Activated CD4-positive, alpha-beta T cell treated with anti-CD3 and anti-CD28 coated beads for 36 hours (primary cell): ENCODE measurements at regions of chr18 and their contacts with region 1.

Region 1: DNA sequence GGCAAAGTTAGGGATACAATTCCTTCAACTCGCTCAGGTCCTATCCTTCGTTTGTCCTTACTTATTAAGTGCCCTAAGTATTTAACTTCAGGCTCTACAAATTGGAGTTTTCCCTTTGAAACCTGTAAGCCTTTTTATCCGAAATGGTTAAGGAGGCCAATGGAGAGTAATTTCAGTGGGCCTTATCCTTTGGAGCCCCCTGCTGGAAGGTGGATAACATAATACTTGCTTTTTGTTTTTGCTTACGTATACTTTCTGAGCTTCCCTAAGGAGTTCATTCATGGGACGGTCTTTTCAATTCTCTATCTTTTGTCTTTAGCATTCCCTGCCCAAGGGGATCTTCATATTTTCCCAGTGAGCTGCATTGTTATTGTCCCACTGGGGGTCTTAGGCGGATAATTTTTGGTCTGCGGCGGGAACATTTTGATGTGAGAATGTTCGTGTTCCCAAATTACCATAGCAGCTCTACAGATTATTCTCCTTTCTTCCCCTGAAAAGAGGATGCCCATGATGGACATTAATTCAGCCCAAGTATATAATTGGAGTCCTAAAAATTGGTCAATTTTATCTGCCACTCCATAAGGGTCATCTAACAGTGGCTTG is 34.4 kb upstream of the TRAPPC8 start:
- DNase-seq: peak; percentile 39
- ATAC-seq: no peak
- H3K4me3 Mint-ChIP-seq: no peak overlapping the region
- H3K27ac Mint-ChIP-seq: no peak overlapping the region
- H3K4me1 Mint-ChIP-seq: no peaks in the 10 kb centered on the region
- H3K27me3 Mint-ChIP-seq: no peaks in the 10 kb centered on the region

Region 2: DNA sequence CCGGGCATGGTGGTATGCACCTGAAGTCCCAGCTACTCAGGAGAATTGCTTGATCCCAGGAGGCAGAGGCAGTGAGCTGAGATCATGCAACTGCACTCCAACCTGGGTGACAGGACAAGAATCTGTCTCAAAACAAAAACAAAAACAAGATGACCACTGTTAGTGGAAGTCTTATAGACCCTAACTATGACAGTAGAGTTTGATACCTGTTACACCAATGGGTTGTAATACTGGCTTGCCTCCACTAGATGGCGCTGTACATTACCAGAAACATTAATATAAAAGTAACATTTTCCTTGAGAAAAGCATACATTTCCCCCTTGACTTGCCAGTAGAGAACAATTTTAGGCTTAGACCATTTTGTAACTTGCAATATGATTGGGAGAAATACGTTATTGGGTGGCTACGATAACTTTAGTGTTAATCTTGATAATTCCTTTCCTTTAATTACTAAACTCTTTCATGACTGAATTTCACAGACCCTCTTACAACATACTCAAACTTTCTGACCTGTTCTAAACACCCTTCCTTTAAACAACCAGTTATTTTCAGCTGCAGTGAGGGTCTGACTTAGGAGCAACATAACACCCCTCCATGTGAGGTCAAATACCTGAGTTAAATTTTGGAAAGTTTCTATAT is 236.2 kb before region 1 on chr18:
- CTCF ChIA-PET with region 1: interaction called, 4 read pairs
- POLR2A ChIA-PET with region 1: no interaction called
- intact Hi-C with region 1: loop called (anchors 1 kb)
- DNase-seq: peak; percentile 73
- ATAC-seq: no peak
- H3K4me3 Mint-ChIP-seq: no peak overlapping the region
- H3K27ac Mint-ChIP-seq: no peak overlapping the region
- H3K4me1 Mint-ChIP-seq: no peaks in the 10 kb centered on the region
- H3K27me3 Mint-ChIP-seq: no peaks in the 10 kb centered on the region

Region 3: GRCh38 chr18:32582455-32582854 is 605.1 kb after region 1 on chr18:
- CTCF ChIA-PET with region 1: no interaction called
- POLR2A ChIA-PET with region 1: no interaction called
- intact Hi-C with region 1: no loop called
- DNase-seq: no peak
- ATAC-seq: no peak
- H3K4me3 Mint-ChIP-seq: no peak overlapping the region
- H3K27ac Mint-ChIP-seq: no peak overlapping the region
- H3K4me1 Mint-ChIP-seq: no peaks in the 10 kb centered on the region
- H3K27me3 Mint-ChIP-seq: peaks cover 9% of the 10 kb centered on the region